Transverse colon (tissue), 4 donors: ENCODE measurements at regions of chr7 and their contacts with region 1.

Region 1: GRCh38 chr7:97027427-97028234 is 3.0 kb upstream of the DLX5 start:
- DNase-seq: peak; percentile 70
- H3K4me3 ChIP-seq: peak overlapping the region in 3 of 4 donors; percentile 0 to 48 (median 7)
- H3K27ac ChIP-seq: no peak overlapping the region
- H3K4me1 ChIP-seq: peaks cover 0 to 32% (median 22%) of the 10 kb centered on the region in 4 donors
- H3K27me3 ChIP-seq: peaks cover 93% of the 10 kb centered on the region
- CTCF ChIP-seq: peak; percentile 67 to 80 (median 77)
- EP300 ChIP-seq: no peak
- POLR2A ChIP-seq: no peak

Region 2: DNA sequence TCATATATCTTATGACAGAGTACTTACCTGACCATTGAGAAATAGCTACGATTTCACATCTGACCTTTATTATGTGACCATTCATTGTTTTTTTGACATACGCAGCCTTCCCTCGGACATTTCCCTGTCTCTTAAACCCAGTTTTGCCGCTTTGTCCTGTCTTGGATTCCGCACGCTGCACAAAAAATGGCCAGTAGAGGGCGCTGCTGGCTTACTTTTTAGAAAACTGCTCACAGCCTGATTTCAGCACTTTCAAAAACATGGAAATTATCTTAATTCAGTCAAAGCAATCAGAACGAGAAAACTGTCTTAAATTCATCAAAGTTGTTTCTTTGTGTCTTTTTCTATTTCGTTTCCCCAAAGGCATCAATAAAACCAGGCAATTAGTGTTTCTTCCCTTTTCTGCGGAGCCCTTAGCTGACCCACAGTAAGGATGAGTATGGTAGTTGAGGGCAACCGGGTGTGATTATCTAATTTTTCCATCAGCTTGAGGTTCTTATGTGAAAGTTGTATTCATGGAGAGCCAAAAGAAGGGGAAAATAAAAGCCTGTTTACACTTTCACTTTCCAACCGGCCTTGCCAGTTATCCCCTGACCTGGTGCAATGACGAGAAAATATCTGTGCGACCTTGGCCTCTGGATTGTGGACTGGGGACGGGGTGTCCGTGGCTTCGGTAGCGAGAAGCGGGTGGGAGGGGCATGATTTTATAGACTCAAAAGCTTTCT is 1110.9 kb before region 1 on chr7:
- in situ Hi-C with region 1: loop called in 2 of 4 experiments (anchors 10 to 25 kb)
- intact Hi-C with region 1: loop called (anchors 10 kb)
- DNase-seq: peak; percentile 79
- H3K4me3 ChIP-seq: peak overlapping the region in 1 of 4 donors; percentile 10
- H3K27ac ChIP-seq: no peak overlapping the region
- H3K4me1 ChIP-seq: peaks cover 0 to 8% (median 0%) of the 10 kb centered on the region in 4 donors
- H3K27me3 ChIP-seq: peaks cover 14% of the 10 kb centered on the region
- CTCF ChIP-seq: peak; percentile 77 to 93 (median 91)
- EP300 ChIP-seq: no peak
- POLR2A ChIP-seq: no peak

Region 3: GRCh38 chr7:96061844-96062243 is 965.8 kb before region 1 on chr7:
- in situ Hi-C with region 1: loop called in 2 of 4 experiments (anchors 25 kb)
- intact Hi-C with region 1: no loop called
- DNase-seq: no peak
- H3K4me3 ChIP-seq: no peak overlapping the region
- H3K27ac ChIP-seq: no peak overlapping the region
- H3K4me1 ChIP-seq: no peaks in the 10 kb centered on the region
- H3K27me3 ChIP-seq: no peaks in the 10 kb centered on the region
- CTCF ChIP-seq: no peak
- EP300 ChIP-seq: no peak
- POLR2A ChIP-seq: no peak

Region 4: DNA sequence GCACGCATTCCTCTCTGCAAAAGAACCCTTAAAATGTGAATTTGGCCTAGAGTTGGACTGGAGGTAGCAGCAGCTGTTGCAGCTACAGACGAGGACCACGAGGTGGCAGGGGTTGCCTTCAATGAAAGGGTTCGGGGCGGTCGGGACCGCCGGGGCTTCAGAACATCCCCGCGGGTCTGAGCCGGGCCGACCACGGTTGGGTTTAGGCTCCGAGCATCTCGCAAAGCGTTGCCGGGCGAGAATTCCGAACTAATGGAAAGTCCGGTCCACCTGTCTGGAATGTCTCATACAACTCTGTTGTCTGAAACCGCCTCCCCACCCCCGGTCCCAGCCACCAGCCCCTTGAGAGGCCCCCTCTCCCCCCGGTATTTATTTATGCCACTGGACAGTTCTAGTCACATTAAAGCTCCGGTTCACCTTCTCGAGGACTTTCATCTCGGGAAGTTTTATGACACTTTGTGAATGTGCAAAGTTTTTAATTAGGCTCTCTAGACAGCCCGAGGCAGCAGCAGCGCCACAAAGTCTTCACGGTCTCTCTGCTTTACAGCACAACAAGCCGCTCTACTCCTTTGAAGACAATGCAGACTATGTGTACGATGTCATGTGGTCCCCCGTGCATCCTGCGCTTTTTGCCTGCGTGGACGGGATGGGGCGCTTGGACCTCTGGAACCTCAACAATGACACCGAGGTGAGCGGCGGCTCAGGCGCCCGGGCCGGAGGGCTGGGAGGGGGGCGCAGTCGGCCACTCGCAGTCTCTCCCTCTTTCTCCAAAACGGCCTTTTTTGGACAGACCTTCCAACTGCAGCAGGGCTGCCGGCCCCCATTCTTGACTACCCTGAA is 951.9 kb before region 1 on chr7:
- in situ Hi-C with region 1: loop called (anchors 5 to 25 kb)
- intact Hi-C with region 1: loop called (anchors 10 kb)
- DNase-seq: peak; percentile 41
- H3K4me3 ChIP-seq: peak overlapping the region; percentile 15 to 50 (median 26)
- H3K27ac ChIP-seq: no peak overlapping the region
- H3K4me1 ChIP-seq: peaks cover 5 to 8% (median 6%) of the 10 kb centered on the region in 4 donors
- H3K27me3 ChIP-seq: peaks cover 34% of the 10 kb centered on the region
- CTCF ChIP-seq: peak; percentile 55 to 75 (median 72)
- EP300 ChIP-seq: no peak
- POLR2A ChIP-seq: no peak

Region 5: GRCh38 chr7:96996105-96996957 is 31.3 kb before region 1 on chr7:
- in situ Hi-C with region 1: no loop called
- intact Hi-C with region 1: no loop called
- DNase-seq: no peak
- H3K4me3 ChIP-seq: no peak overlapping the region
- H3K27ac ChIP-seq: no peak overlapping the region
- H3K4me1 ChIP-seq: no peaks in the 10 kb centered on the region
- H3K27me3 ChIP-seq: peaks cover 100% of the 10 kb centered on the region
- CTCF ChIP-seq: no peak
- EP300 ChIP-seq: no peak
- POLR2A ChIP-seq: no peak

Region 6: DNA sequence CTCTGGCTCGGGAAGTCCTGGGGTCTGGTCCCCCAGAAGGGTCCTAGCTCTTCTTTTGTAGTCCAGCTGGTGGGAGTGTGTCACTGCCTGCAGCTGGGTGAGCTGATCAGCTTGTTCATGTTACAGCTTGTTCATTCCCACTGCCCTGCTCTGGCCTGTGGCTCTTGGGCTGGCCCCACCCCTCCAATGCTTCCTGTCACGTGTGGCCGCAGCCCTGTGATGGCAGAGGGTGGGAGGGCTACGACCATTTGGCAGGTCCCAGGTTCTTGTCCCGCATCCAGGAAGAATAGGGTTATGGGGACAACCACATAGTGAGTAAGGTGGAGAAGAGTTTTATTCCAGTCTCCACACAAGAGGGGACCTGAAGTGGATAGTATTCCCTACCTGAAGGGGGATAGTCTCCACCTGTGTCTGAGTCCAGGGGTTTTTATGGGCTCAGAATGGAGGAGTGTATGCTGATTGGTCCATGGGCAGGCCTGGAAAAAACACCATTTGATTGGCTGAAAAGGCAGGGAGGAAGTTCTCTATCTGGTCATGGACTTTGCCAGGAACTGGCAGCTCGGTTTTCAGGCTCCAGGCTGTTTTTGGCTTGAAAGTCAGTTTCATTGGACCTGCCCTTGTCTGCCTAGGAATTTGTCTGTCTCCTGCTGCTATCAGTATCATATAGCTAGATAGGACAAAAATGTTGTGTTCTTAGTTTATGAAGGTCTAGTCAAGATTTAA is 102.9 kb after region 1 on chr7:
- in situ Hi-C with region 1: no loop called
- intact Hi-C with region 1: no loop called
- DNase-seq: no peak
- H3K4me3 ChIP-seq: no peak overlapping the region
- H3K27ac ChIP-seq: no peak overlapping the region
- H3K4me1 ChIP-seq: peaks cover 0 to 4% (median 0%) of the 10 kb centered on the region in 4 donors
- H3K27me3 ChIP-seq: no peaks in the 10 kb centered on the region
- CTCF ChIP-seq: no peak
- EP300 ChIP-seq: no peak
- POLR2A ChIP-seq: no peak

Region 7: DNA sequence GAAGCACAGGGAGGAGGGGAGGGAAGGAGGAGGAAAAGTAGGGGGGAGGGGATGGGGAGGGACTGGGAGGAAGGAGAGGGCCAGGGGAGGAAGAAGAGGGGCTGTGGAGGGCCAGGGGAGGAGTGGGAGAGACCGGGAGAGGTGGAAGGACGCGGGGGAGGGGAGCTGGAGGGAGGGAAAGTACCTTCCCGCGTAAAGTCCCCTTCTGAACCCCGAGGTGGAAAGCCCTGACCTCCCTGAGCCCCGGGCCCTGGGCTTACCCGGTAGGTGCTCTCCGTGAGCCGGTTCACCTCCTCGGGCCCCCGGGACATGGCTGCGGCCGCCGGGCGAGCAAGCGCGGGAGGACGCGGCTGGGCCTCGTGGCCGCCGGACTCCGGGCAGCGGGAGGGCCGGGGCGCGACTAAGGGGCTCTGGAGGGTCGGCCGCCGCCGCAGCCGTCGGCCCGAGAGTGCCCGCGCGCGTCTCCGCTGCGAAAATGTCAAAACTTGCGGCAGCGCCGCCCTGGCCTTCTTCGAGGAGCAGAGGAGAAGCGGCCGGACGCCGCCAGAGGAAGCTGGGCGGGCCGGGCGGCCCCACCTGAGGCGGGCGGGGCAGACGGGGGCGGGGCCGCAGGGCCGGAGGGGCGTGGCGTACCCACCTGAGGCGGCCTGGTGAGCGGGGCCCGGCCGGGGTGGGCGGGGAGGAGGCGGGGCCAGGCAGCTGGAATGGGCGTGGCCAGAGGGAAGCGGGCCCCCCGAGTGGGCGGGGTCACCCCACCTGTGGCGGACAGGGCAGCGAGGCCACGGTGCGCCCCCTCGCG is 1373.1 kb after region 1 on chr7 and contains the start of gene BAIAP2L1:
- in situ Hi-C with region 1: no loop called
- intact Hi-C with region 1: no loop called
- DNase-seq: peak; percentile 97
- H3K4me3 ChIP-seq: peak within 1 kb of the TSS; percentile 24 to 67 (median 52)
- H3K27ac ChIP-seq: peak within 1 kb of the TSS; percentile 87 to 96 (median 90)
- H3K4me1 ChIP-seq: peaks cover 4 to 34% (median 13%) of the 10 kb centered on the region in 4 donors
- H3K27me3 ChIP-seq: peaks cover 28% of the 10 kb centered on the region
- CTCF ChIP-seq: peak in 1 of 5 experiments; percentile 57
- EP300 ChIP-seq: no peak
- POLR2A ChIP-seq: peak; percentile 67
- total RNA-seq, gene BAIAP2L1: 39.8 to 59.8 (median 53.3) TPM